ENCODE measurements at regions of chr17 and their contacts with region 1.

Region 1: DNA sequence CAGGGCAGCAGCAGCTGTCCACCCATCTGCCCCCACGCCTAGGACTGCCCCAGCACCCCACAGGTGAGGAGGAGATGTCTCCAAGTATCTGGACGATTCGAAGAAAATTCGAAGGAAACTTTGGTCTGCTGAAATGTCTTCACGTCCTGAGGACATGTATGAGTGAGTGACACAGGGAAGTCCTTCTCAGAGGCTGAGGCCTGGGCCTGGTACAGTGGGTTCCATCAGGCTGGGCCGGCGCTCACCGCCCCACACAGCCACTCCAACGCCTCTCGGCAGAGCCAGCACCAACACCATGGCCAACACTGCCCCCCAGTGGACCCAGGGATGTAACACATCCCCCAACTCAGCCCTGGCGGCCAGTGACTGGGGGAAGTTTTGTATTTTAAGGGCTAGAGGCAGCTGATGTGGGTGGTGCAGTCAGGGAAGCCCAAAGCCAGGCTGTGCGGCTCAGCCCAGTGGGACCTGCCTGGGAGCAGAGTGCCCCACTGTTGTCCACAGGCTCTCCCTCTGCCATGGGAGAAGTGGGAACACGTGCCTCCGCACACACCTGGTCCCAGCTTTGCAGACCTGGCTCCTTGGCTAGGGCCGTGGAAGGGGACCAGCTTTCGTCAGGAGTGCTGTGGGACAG is 55.8 kb upstream of the FASN start:
- DNase-seq: peak; percentile 77 to 84 (median 78)
- ATAC-seq: peak; percentile 87
- H3K4me3 ChIP-seq: no peak overlapping the region
- H3K27ac ChIP-seq: no peak overlapping the region
- H3K4me1 ChIP-seq: peaks cover 10% of the 10 kb centered on the region
- H3K27me3 ChIP-seq: no peaks in the 10 kb centered on the region
- CTCF ChIP-seq: peak; percentile 66 to 95 (median 91)
- POLR2A ChIP-seq: no peak

Region 2: DNA sequence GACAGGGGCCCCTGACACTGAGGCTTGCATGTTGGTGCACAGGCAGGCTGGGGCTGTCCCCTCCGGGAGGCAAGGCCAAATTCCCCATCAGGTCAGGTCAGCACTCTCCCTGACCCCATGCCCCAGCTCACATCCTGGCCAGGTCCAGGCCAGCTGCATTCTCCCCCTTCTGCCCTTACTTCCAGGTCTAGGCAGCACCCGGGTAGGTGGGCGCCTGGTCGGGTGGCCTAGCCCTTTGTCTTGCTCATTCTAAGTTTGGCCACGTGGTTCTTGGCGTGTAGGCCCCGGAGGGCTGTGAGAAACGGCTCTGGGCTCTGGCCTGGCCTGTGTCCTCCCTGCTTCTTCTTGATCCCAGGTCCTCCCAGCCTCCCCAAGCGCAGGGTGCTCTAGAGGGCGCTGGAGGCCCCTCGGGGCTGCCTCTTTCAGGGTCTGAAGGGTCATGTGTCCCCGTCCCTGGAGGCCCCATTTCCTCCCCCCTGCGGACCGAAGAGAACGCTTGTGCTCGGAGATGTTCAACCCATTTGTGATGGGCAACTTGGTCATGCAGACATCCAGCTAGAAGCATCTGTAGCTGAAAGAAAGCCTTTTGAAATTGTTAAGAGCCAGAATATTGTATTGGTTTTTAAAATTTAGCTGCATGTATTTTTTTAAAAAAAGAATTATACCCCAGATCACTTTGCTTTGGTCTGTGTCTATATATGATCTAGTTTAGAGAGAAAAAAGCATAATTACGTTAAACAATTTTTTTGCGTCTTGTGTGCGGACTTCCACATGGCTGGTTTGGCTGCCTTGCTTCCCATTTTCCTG is 751.9 kb before region 1 on chr17:
- intact Hi-C with region 1: no loop called
- DNase-seq: peak in 2 of 4 donors; percentile 40 to 43
- ATAC-seq: no peak
- H3K4me3 ChIP-seq: no peak overlapping the region
- H3K27ac ChIP-seq: peak overlapping the region in 2 of 4 donors; percentile 34 to 93
- H3K4me1 ChIP-seq: peaks cover 56% of the 10 kb centered on the region
- H3K27me3 ChIP-seq: no peaks in the 10 kb centered on the region
- CTCF ChIP-seq: peak in 3 of 7 experiments; percentile 13 to 21 (median 19)
- POLR2A ChIP-seq: no peak

Region 3: DNA sequence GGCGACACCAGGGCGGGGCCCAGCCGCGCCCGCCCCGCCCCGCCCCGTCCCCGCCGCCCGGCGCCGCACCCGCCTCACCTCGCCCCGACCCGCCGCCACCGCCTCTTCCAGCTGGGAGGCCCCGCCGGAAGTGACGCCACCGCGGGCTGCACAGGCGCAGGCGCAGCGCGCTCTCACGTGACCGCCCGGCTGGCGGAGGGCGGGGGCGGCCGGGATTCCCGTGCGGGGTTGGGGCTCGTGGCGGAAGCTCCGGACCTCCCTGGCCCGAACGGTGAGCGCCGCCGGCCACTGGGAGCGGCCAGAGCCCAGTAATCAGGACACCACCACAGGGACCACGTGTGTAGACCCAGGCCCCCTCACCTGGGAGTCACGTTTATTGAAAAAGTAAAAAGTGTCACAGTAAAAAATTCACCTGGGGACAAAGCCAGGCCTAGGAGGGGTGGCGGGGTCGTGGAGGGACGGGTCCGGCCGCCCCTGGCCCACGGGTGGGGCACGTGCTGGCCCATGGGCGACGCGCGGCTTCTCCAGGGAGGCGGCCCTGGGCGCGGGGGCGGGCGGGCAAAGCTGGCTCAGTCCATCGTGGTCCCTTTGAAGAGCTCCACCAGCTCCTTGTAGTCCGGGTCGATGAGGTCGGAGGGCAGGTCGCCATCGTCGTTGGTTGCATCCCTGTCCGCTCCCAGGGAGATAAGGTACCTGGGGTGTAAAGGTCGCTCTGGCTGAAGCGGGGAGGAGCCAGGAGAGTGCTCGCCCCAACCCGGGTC is 320.5 kb before region 1 on chr17 and contains the start of gene MCRIP1:
- intact Hi-C with region 1: no loop called
- DNase-seq: peak; percentile 96 to 97 (median 96)
- ATAC-seq: peak; percentile 94
- H3K4me3 ChIP-seq: peak within 1 kb of the TSS; percentile 53 to 61
- H3K27ac ChIP-seq: peak within 1 kb of the TSS; percentile 87 to 95 (median 92)
- H3K4me1 ChIP-seq: peaks cover 31% of the 10 kb centered on the region
- H3K27me3 ChIP-seq: no peaks in the 10 kb centered on the region
- CTCF ChIP-seq: peak in 1 of 7 experiments; percentile 7
- POLR2A ChIP-seq: peak; percentile 80 to 93 (median 91)
- total RNA-seq, gene MCRIP1: 46.1 to 65.6 TPM

Region 4: GRCh38 chr17:82029990-82030469 is 123.8 kb before region 1 on chr17:
- intact Hi-C with region 1: loop called (anchors 5 kb)
- DNase-seq: no peak
- ATAC-seq: peak; percentile 2
- H3K4me3 ChIP-seq: no peak overlapping the region
- H3K27ac ChIP-seq: no peak overlapping the region
- H3K4me1 ChIP-seq: peaks cover 21% of the 10 kb centered on the region
- H3K27me3 ChIP-seq: no peaks in the 10 kb centered on the region
- CTCF ChIP-seq: no peak
- POLR2A ChIP-seq: no peak